ENCODE measurements at regions of chr16 and their contacts with region 1.

Region 1: DNA sequence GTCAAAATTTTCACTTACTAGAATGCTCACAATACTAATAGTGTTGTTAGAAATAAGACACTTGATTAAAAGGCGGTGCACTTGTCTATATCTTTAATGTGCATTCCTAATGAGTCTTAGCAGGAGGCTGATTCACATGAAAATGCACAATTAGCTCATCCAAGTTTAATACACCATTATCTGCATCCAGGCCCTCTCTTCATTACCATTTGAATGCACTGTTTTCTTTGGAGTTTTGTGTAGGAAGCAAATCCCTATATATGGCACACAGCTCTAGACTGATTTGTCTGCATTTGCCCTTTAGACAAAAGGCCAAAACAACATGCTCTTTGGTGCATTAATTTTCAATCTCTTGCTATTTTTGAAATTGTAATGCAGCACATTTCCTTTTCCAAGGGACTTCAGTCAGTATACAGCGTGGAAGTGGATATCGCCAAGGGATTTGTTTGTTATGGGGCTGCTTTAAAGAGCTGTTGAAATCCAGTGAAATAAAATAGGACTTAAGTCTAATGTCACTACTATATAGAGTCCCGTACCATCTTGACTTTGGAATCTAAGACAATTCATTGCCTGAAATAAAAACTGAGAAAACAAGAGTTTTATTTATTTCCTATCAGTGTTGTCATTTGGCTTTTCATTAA is 257.6 kb upstream of the CPHXL start:
- DNase-seq: no peak

Region 2: DNA sequence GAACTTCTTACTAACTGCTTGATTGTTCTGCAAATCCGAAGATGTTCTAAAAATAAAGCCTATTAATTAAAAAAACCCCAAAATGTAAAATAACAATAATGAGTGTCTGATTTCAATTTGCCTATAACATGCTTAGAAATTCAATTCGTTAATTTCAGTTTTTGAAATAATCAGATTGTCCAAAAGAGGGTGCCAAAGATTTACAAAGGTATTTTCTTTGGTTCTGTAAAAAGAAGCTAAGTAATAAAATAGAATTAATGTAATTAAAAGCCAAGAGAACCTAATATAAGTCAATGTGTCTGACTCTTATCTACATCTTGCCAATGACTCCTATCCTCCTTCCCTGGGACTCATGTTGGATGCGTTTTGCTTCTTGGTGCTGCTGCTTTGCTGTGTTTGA is 182.6 kb before region 1 on chr16:
- intact Hi-C with region 1: loop called (anchors 5 kb)
- DNase-seq: no peak

Region 3: GRCh38 chr16:75938818-75939217 is 45.0 kb before region 1 on chr16:
- intact Hi-C with region 1: no loop called
- DNase-seq: peak in 1 of 10 donors; percentile 71

Region 4: DNA sequence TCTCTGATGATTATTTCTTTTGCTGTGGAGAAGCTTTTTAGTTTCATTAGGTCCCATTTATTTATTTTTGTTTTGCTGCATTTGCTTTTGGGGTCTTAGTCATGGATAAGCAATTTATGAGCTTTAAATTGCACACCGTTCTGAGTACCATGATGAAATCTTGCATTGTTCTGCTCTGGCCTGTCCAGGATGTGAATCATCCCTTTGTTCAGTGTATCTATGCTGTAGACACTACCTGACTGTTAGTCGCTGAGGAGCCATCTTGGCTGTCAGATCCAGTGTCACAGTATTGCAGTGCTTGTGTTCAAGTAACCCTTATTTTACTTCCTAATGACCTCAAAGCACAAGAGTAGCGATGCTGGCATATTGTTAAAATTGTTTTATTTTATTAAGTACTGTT is 75.3 kb after region 1 on chr16:
- intact Hi-C with region 1: no loop called
- DNase-seq: peak in 1 of 10 donors; percentile 25